WTC11 (cell line): ENCODE measurements at regions of chr3 and their contacts with region 1.

Region 1: DNA sequence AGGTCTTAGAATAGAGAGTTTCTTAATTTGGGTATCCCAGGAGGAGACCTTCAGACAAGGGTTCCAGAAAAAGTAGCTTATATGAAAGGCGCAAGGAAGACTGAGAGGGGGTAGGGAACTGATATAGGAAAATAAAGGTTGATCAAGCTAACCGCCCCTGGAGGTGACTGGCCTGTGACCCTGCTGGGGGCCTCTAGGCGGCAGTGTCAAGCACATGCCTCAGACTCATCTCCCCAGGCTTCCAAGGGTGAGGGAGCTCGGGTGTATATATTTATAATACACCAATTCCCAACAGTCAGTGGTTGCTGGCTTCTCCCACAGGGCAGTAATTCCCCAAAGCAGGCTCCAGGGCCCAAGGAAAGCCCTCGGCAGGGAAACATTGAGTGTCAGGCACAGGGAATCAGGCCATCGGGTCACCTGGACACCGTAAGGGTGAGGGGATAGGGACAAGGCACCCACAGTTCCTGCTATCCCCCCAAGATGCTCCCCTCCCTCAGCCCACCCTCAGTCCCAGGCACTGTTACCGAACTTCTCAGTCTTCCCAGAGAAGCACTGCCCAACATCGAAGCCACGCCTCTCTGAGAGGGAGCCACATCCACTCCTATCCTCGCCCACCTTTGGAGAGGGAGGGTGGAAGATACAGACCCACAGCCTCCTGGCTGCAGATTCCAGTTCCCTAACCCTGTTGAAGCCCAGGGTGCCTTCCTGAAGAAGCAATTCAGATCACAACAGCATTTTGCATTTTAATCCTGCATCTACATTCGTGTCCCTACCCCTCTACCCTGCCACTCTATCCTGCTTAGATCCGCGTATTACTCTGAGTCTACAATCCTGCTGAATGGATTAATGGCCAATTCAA is 19.5 kb upstream of the CAV3 start:
- DNase-seq: peak; percentile 72
- ATAC-seq: peak; percentile 91
- H3K4me3 Mint-ChIP-seq: no peak overlapping the region
- H3K27ac Mint-ChIP-seq: no peak overlapping the region
- H3K4me1 Mint-ChIP-seq: peaks cover 12% of the 10 kb centered on the region
- H3K27me3 Mint-ChIP-seq: peaks cover 100% of the 10 kb centered on the region
- CTCF ChIP-seq: peak; percentile 47; the same call in 1 of the 2 replicates

Region 2: DNA sequence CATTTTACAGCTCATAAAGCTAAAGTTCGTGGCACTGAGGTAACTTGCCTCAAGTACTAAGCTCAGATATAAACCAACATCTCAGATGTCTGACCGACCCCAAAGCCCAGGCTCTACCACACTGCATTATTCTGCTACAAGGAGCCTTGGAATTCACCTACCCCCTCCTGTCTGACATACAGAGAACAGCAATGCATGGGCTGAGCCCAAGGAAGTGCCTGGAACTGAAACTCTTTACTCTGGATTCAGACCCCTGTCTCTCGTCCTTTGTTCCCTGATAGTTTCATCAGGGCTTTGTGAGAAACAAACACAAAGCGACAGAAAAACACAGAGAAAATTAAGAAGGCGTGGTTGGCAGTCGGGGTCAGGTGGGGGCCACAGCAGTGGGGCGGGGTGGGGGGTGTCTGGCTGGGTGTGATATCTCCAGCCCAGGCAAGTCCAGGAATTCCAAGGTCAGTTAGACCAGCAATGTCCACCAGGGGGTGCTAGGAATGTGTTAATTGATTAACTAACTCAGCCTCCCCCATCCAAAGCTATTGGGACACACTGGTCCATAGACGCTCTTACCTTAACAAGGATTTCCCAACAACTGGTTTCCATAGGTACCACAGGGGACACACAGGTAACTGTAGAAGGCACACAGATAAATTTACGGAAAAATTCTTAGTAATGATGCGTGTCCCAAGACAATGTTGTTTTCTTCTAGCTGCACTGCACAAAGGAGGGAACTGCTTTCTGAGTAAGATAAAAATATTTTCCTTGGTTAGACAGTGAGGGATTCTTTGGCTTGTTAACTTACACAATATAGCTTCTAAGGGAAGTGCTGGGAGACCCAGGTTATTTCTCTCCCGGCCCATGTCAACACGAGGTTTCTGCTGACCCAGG is 50.7 kb before region 1 on chr3:
- CTCF ChIA-PET with region 1: interaction called, 21 read pairs
- POLR2A ChIA-PET with region 1: no interaction called
- DNase-seq: peak; percentile 95
- ATAC-seq: peak; percentile 92
- H3K4me3 Mint-ChIP-seq: no peak overlapping the region
- H3K27ac Mint-ChIP-seq: no peak overlapping the region
- H3K4me1 Mint-ChIP-seq: peaks cover 9% of the 10 kb centered on the region
- H3K27me3 Mint-ChIP-seq: peaks cover 52% of the 10 kb centered on the region
- CTCF ChIP-seq: peak; percentile 70

Region 3: DNA sequence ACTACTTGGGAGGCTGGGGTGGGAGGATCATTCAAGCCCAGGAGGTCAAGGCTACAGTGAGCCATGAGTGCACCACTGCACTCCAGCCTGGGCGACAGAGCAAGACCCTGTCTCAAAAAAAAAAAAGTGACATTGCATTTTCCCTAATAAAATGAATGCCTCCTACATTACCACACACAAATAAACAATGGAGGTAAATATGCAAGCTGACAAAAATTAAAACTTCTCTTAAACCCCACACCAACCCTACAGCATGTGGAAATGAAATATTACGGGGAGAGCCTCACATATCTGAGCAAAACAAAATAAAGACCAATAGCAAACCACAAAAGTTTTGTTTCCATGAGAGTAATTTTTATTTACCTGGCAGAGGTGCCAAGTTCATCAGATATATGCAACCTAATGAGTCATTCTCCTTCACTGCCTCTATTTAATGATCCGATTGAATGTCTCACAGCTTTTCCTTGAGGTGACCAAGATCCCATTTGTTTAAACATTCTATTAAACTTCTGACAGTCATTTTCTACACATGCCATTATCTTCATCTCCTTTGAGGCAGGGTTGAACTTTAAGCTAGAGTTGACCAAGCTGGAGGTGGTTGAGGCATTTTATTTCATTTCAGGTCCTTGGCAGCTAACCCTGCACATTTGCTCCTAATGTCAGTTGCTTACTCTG is 10.1 kb after region 1 on chr3:
- CTCF ChIA-PET with region 1: interaction called, 25 read pairs
- POLR2A ChIA-PET with region 1: no interaction called
- DNase-seq: no peak
- ATAC-seq: no peak
- H3K4me3 Mint-ChIP-seq: no peak overlapping the region
- H3K27ac Mint-ChIP-seq: no peak overlapping the region
- H3K4me1 Mint-ChIP-seq: peaks cover 30% of the 10 kb centered on the region
- H3K27me3 Mint-ChIP-seq: peaks cover 66% of the 10 kb centered on the region
- CTCF ChIP-seq: no peak

Region 4: DNA sequence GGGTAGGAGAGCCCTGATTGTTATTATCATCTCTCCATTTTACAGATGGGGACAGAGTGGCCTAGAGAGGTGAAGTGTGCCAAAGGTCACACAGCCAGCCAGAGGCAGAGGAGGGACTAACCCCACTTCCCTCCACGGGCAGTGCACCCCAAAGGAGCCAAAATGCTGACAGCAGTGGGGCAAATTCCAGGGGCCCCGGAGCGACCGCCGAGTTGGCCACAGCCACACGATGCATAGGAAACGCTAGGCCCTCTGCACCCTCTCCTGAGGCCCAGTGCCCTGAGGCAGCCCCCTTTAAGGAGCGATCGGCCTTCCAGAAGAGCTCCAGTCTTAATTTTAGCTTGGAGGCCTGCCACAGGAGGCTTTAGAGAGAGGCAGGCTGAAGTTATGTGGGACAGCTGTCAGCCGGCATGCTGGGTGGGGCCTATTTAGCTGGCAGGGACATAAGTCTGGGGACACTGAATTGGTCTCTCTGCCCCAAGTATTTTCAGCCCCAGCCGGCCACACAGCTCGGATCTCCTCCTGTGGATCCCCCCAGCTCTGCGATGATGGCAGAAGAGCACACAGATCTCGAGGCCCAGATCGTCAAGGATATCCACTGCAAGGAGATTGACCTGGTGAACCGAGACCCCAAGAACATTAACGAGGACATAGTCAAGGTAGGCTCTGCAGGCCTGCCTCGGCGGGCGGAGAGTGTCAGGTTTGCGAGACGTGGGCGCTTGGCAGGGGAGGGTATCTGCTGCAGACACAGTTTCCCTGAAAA is 19.4 kb after region 1 on chr3 and contains the start of gene CAV3:
- CTCF ChIA-PET with region 1: interaction called, 25 read pairs
- POLR2A ChIA-PET with region 1: no interaction called
- DNase-seq: no peak
- ATAC-seq: no peak
- H3K4me3 Mint-ChIP-seq: no peak within 1 kb of the TSS
- H3K27ac Mint-ChIP-seq: no peak within 1 kb of the TSS
- H3K4me1 Mint-ChIP-seq: peaks cover 11% of the 10 kb centered on the region
- H3K27me3 Mint-ChIP-seq: peaks cover 39% of the 10 kb centered on the region
- CTCF ChIP-seq: no peak
- total RNA-seq, gene CAV3: not detected in 3 replicates

Region 5: GRCh38 chr3:8741581-8742261 is 27.6 kb after region 1 on chr3:
- CTCF ChIA-PET with region 1: interaction called, 13 read pairs
- POLR2A ChIA-PET with region 1: no interaction called
- DNase-seq: peak; percentile 58
- ATAC-seq: peak; percentile 90
- H3K4me3 Mint-ChIP-seq: peak overlapping the region; percentile 52
- H3K27ac Mint-ChIP-seq: peak overlapping the region; percentile 61; the same call in 1 of the 2 replicates
- H3K4me1 Mint-ChIP-seq: peaks cover 33% of the 10 kb centered on the region
- H3K27me3 Mint-ChIP-seq: peaks cover 13% of the 10 kb centered on the region
- CTCF ChIP-seq: no peak